Common myeloid progenitor, CD34-positive (primary cell): ENCODE measurements at regions of chr10 and their contacts with region 1.

Region 1: DNA sequence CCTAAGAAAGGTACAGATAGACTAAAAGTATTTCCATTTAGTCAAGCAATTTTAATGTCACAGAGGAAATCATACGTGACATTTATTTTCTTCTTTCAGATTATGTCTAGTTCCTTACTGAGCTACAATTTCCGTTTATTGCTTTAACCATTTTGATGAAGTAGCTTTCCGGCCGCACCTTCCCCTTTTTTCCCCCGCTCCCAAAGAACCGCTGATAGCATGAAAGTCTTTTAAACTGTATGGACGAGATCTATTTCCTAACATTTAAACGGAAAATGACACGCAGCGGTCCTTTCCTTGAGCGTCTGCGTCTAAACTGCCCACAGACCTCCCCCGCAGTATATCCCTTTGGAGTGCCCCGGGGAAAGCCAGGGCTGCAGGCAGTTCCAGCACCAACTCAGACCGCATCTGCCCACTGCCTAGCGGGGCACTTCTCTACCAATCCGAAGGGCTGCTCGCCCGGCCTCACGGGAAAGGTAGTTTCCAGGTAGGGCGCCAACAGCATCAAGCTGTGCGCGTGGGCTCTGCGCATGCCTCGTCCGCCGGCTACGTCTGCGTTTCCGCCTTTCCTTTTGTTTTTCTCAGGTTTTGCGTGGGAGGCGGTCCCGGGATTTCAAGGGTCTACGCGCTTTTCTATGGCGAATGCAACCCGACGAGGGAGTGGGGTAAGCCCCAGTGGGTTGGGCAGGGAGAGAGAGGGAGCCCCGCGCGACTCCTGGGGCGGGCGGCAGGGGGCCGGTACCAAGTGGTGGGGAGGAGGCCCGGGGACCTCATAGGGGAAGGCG is at the start of gene ZNF33A:
- DNase-seq: peak; percentile 89 to 97 (median 97)
- H3K4me3 ChIP-seq: peak within 1 kb of the TSS; percentile 48 to 89 (median 78)
- H3K27ac ChIP-seq: peak within 1 kb of the TSS; percentile 84 to 93
- H3K4me1 ChIP-seq: peaks cover 6 to 25% (median 13%) of the 10 kb centered on the region in 4 experiments
- H3K27me3 ChIP-seq: no peaks in the 10 kb centered on the region

Region 2: GRCh38 chr10:37952056-37952755 is 58.1 kb before region 1 on chr10:
- CTCF ChIA-PET with region 1: no interaction called
- POLR2A ChIA-PET with region 1: no interaction called
- DNase-seq: no peak
- H3K4me3 ChIP-seq: no peak overlapping the region
- H3K27ac ChIP-seq: no peak overlapping the region
- H3K4me1 ChIP-seq: no peaks in the 10 kb centered on the region
- H3K27me3 ChIP-seq: no peaks in the 10 kb centered on the region

Region 3: GRCh38 chr10:37976091-37976879 is 34.0 kb before region 1 on chr10 and contains the start of gene ZNF25:
- CTCF ChIA-PET with region 1: interaction called, 11 read pairs
- POLR2A ChIA-PET with region 1: interaction called, 5 read pairs
- DNase-seq: peak; percentile 100
- H3K4me3 ChIP-seq: peak within 1 kb of the TSS; percentile 72 to 95 (median 89)
- H3K27ac ChIP-seq: peak within 1 kb of the TSS; percentile 59 to 87
- H3K4me1 ChIP-seq: peaks cover 4 to 17% (median 10%) of the 10 kb centered on the region in 4 experiments
- H3K27me3 ChIP-seq: no peaks in the 10 kb centered on the region